ENCODE measurements at regions of chr10 and their contacts with region 1.

Region 1: DNA sequence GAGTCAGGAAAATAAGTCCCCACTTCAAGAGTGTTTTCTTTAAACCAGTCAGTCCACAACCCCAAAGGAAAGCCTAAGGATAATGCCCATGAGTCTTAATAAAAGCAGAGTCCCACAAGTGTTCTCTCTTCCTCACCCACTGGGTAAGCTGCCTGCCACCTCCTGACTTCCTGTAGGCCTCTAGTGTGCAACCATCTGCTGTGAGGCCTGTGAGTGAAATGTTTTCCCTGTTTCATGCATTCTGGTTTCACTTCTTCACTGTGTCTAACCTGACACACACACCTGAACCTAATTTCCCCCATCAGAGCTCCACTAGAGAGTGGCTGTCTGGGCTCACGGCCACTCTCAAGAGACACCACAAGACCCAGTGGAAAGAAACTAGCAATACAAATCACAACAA is 38.9 kb upstream of the GDF10 start:
- DNase-seq: peak; percentile 32 to 78 (median 68)
- H3K4me3 ChIP-seq: no peak overlapping the region
- H3K27ac ChIP-seq: no peak overlapping the region
- H3K4me1 ChIP-seq: peaks cover 24 to 59% (median 38%) of the 10 kb centered on the region in 4 experiments
- H3K27me3 ChIP-seq: no peaks in the 10 kb centered on the region

Region 2: GRCh38 chr10:47276576-47277351 is 15.6 kb after region 1 on chr10:
- CTCF ChIA-PET with region 1: interaction called, 15 read pairs
- POLR2A ChIA-PET with region 1: no interaction called
- DNase-seq: no peak
- H3K4me3 ChIP-seq: no peak overlapping the region
- H3K27ac ChIP-seq: no peak overlapping the region
- H3K4me1 ChIP-seq: peaks cover 0 to 16% (median 13%) of the 10 kb centered on the region in 4 experiments
- H3K27me3 ChIP-seq: no peaks in the 10 kb centered on the region

Region 3: GRCh38 chr10:47296156-47296894 is 35.2 kb after region 1 on chr10:
- CTCF ChIA-PET with region 1: interaction called, 10 read pairs
- POLR2A ChIA-PET with region 1: no interaction called
- DNase-seq: no peak
- H3K4me3 ChIP-seq: no peak overlapping the region
- H3K27ac ChIP-seq: no peak overlapping the region
- H3K4me1 ChIP-seq: peaks cover 0 to 14% (median 12%) of the 10 kb centered on the region in 4 experiments
- H3K27me3 ChIP-seq: peaks cover 0 to 69% (median 28%) of the 10 kb centered on the region in 5 experiments